ENCODE measurements at regions of chr6 and their contacts with region 1.

Region 1: DNA sequence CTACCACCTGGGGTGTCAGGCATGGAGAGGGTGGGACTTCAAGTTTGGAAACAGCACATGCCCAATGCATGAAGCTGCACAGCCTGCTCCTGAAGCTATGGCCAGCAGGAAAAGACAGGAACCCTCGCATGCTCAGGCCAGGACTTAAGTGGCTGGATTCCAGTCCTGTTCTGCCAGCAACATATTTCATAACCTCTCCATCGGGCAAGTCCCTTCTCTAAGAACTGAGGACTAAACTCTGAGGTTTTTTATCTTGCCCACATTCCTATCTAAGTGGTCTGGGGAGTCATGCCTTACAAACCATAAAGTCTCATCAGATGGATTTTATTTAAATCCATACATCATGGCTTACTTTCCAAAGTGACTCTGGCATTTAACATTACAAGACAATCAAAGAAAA is 27.5 kb upstream of the AGPAT4 start:
- DNase-seq: no peak
- H3K4me3 ChIP-seq: no peak overlapping the region
- H3K27ac ChIP-seq: no peak overlapping the region
- H3K4me1 ChIP-seq: no peaks in the 10 kb centered on the region
- H3K27me3 ChIP-seq: no peaks in the 10 kb centered on the region
- CTCF ChIP-seq: no peak
- POLR2A ChIP-seq: no peak

Region 2: GRCh38 chr6:161338015-161338414 is 36.7 kb after region 1 on chr6:
- CTCF ChIA-PET with region 1: no interaction called
- POLR2A ChIA-PET with region 1: no interaction called
- dilution Hi-C with region 1: no loop called
- intact Hi-C with region 1: loop called (anchors 1 kb)
- DNase-seq: no peak
- H3K4me3 ChIP-seq: no peak overlapping the region
- H3K27ac ChIP-seq: no peak overlapping the region
- H3K4me1 ChIP-seq: no peaks in the 10 kb centered on the region
- H3K27me3 ChIP-seq: no peaks in the 10 kb centered on the region
- CTCF ChIP-seq: no peak
- POLR2A ChIP-seq: no peak

Region 3: DNA sequence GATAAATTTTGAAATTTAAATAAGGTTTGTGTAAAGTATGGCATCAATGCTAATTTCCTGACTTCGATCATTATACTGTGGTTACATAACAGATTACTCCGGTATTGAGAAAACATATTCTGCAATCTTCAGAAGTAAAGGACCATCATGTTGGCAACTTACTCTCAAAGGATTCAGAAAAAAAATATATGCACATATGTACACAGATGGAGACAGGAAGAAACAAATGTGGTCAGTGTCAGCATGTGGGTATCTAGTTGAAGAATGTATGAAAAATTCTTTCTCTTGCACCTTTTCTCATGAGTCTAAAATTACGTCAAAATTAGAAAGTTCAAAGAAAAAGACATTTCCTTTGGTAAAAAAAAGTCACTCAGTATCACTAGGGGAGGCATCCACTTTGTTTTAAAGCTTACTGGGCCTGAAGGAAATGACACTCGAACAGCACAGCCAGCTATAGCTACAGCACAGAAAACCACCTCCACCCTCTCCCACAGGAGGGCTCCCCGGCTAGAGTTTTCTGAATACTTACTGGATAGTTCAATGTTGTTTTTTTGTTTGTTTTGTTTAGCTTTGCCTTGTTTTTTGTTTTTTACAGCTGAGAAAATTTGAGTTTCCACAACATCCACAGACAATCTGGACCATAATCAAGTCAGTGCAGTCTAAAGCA is 289.8 kb after region 1 on chr6:
- CTCF ChIA-PET with region 1: no interaction called
- POLR2A ChIA-PET with region 1: no interaction called
- dilution Hi-C with region 1: no loop called
- intact Hi-C with region 1: no loop called
- DNase-seq: no peak
- H3K4me3 ChIP-seq: no peak overlapping the region
- H3K27ac ChIP-seq: no peak overlapping the region
- H3K4me1 ChIP-seq: no peaks in the 10 kb centered on the region
- H3K27me3 ChIP-seq: no peaks in the 10 kb centered on the region
- CTCF ChIP-seq: no peak
- POLR2A ChIP-seq: no peak

Region 4: DNA sequence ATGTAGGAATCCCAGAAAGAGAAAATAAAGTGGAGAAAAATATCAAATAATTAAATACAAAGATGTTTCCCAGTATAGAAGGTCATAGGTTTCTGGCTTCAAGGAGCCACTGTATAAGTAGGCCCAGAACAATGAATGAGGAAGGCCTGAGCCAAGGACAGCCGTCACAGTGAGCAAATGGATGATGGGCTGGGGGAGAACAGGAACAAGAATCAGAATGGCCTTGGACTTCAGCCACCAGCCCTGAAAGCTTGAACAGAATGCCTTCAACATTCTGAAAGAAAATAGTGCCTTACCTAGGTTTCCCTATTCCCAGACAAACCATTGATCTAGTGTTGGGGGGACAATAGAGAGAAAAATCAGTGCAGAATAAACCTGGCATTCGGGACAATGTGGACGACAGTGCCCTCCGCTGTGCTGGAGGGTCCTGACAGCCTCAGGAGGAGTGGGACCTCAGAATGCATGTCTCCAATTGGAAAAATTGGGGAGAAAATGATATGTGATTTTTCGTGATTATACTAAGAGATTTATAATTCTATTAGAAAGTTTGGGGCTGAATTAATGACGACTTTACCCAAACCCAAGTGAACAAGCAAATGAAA is 306.5 kb after region 1 on chr6:
- CTCF ChIA-PET with region 1: no interaction called
- POLR2A ChIA-PET with region 1: no interaction called
- dilution Hi-C with region 1: no loop called
- intact Hi-C with region 1: no loop called
- DNase-seq: no peak
- H3K4me3 ChIP-seq: no peak overlapping the region
- H3K27ac ChIP-seq: no peak overlapping the region
- H3K4me1 ChIP-seq: no peaks in the 10 kb centered on the region
- H3K27me3 ChIP-seq: no peaks in the 10 kb centered on the region
- CTCF ChIP-seq: no peak
- POLR2A ChIP-seq: no peak